Natural killer cell (primary cell): ENCODE measurements at regions of chr4 and their contacts with region 1.

Region 1: DNA sequence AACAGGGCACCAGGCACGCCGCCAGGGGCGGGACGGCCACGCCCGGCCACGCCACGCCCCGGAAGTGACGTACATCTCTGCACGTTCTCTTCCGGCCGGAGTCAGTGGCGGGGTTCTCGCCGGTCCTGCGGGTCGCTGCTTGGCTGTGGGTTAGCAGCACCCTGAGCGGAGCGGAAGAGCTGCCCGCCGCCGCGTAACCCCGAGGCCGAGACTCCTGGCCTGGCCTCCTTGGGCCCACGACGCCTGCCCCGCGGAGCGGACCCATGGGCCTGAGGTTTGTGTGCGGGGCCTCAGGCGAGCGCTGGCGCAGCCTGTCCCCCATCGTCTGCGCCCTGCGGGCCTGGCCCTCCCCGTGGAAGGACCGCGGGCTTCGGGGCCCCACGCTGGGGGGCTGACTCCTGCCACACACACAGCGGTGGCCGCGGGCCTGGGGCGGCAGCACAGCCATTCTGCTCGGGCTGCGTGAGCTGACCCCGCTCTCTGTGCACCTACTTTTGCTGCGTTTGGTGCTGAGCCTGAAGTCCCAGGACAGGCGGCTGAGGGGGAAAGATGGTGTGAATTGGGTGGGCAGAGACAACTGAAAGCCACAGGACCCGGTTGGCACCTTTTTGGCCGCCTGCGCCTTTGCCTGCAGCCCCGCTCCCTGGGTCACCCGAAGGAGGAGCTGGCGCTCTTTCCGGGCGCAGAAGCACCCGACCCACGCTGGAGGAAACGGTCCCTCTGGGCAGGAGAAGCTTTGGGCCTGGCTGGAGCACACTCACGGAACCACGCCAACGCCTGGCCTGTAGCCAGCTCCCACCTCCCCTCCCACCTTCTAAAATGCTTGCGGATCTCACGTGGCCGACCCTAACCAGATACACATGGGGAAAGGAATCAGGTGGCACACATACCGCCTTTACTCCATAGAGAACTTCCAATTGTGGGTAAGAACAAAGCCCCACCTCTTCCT is 28.1 kb downstream of the NOP14 start:
- DNase-seq: peak; percentile 98
- ATAC-seq: peak; percentile 78 to 86 (median 83)
- H3K4me3 ChIP-seq: peak overlapping the region; percentile 55
- H3K4me3 Mint-ChIP-seq: peak overlapping the region; percentile 78
- H3K27ac ChIP-seq: peak overlapping the region; percentile 65
- H3K27ac Mint-ChIP-seq: peak overlapping the region; percentile 71 to 83
- H3K4me1 ChIP-seq: peaks cover 60% of the 10 kb centered on the region
- H3K4me1 Mint-ChIP-seq: peaks cover 39 to 44% of the 10 kb centered on the region in 2 donors
- H3K27me3 ChIP-seq: no peaks in the 10 kb centered on the region
- H3K27me3 Mint-ChIP-seq: no peaks in the 10 kb centered on the region
- CTCF ChIP-seq: no peak

Region 2: DNA sequence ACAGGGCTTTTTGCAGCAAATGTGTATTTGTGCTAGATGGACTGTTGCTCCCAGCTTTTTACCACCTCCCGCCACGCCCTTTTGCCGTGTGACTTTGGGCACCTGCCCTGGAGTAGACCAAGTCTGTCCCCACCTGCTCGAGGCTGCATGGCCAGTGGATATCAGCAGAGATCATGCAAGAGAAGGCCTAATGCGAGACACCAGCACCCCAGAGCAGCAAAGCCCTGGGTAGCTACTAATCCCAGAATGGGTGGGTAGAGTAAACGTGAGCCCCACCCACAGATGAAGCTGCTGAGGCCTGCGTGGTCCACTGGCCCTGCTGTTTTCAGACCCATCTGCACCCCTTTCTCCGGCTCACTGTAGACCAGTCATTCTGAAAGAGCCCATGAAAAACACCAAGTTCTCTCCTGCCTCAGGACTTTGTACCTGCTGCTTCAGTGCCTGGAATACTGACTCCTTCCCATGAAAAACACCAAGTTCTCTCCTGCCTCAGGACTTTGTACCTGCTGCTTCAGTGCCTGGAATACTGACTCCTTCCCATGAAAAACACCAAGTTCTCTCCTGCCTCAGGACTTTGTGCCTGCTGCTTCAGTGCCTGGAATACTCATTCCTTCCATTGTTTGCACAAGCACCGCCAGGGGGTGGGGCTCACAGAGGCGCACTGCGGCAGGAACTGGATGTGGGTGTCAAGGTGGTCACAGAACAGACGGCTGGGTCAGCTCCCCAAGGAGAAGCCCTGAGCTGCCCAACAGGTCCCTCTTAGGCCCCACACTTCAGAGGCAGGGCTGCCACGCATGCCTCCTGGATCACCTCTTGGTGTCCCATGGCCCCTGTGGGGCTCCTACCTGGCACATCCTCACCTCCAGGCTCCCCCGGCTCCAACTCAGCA is 173.8 kb before region 1 on chr4:
- intact Hi-C with region 1: loop called (anchors 10 kb)
- DNase-seq: no peak
- ATAC-seq: no peak
- H3K4me3 ChIP-seq: no peak overlapping the region
- H3K4me3 Mint-ChIP-seq: no peak overlapping the region
- H3K27ac ChIP-seq: no peak overlapping the region
- H3K27ac Mint-ChIP-seq: no peak overlapping the region
- H3K4me1 ChIP-seq: peaks cover 20% of the 10 kb centered on the region
- H3K4me1 Mint-ChIP-seq: peaks cover 8 to 14% of the 10 kb centered on the region in 2 donors
- H3K27me3 ChIP-seq: no peaks in the 10 kb centered on the region
- H3K27me3 Mint-ChIP-seq: no peaks in the 10 kb centered on the region
- CTCF ChIP-seq: no peak